Dendritic cell treated with granulocyte-macrophage colony-stimulating factor and Interleukin-4, amounts not matched to agents 40 ng/mL and 50 ng/mL, for 4 days (primary cell): ENCODE measurements at regions of chr6 and their contacts with region 1.

Region 1: DNA sequence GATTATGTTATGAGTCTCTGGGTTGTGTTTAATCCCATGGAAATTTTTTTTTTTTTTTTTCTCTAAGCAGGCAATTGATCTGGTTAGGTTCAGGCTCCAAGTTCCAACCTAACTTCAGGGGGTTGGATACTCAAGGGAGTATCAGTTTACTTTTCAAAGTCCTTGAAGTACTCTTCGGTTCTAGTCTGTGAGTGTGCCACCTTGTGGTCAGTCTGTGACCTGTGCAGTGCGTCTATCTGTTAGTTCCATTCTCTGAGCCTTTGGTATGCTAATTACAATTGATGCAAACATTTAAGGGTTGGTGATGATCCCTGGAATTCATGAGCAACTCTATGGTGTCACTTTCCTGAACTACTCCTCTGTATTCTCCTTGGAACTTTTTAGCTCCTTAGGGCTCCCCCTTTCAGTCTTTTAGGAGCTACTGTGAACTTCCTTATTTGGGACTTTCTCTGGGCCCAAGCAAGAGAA is 342.0 kb downstream of the SOX4 start:
- H3K4me3 Mint-ChIP-seq: no peak overlapping the region
- H3K27ac Mint-ChIP-seq: no peak overlapping the region
- H3K4me1 Mint-ChIP-seq: no peaks in the 10 kb centered on the region
- H3K27me3 Mint-ChIP-seq: no peaks in the 10 kb centered on the region

Region 2: DNA sequence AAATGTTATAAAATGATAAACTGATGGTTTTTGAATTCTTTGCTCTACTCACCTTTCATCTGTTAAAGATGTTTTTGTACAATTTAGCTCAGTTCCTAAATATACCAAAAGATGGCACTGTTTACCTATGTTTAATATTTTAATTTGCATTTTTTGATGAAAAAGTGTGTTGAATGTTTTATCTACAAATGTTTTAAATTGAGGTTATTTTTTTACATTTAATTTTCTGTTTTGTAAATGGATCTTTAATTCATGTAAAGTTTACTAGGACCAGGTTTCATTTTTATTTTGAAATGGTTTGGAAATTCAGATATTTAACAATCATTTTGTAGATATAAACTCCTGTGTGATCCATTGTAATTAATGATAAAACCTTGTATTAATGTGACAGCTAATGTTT is 1371.3 kb before region 1 on chr6:
- intact Hi-C with region 1: loop called (anchors 10 kb)
- H3K4me3 Mint-ChIP-seq: no peak overlapping the region
- H3K27ac Mint-ChIP-seq: no peak overlapping the region
- H3K4me1 Mint-ChIP-seq: no peaks in the 10 kb centered on the region
- H3K27me3 Mint-ChIP-seq: no peaks in the 10 kb centered on the region

Region 3: DNA sequence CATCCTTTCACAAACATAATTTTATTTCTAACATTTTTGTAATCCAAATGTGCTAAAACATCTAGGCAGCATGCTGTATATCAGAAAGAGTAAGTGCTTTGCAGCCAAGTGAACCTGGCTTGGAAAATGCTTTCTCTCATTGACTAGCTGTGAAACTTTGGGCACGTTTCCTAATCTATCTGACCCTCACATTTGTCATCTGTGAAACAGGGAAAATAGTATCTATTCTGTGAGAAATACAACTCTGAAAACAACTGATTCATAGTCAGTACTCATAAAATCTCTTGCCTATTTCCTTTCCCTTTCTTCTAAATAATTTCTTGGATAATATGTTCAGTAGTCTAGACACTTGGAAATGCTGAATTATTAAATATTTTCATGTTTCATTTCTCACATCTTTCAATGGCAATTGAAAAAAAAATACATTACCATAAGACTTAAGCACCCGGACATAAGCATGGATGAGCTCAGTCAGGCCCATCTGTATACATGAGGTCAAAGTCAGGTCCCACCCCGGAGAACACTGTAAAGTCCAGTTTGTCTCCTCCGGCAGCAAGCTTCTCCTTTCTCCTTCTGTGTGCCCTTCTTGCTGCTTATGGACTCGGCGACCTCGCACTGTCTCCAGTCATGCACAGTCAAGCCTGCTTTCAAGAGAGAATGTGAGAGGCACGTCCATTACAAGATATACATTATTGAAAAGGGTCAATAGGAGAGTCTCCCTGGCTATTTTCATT is 797.1 kb before region 1 on chr6:
- intact Hi-C with region 1: no loop called
- H3K4me3 Mint-ChIP-seq: no peak overlapping the region
- H3K27ac Mint-ChIP-seq: no peak overlapping the region
- H3K4me1 Mint-ChIP-seq: no peaks in the 10 kb centered on the region
- H3K27me3 Mint-ChIP-seq: no peaks in the 10 kb centered on the region

Region 4: GRCh38 chr6:21597801-21598673 is 337.6 kb before region 1 on chr6:
- intact Hi-C with region 1: no loop called
- H3K4me3 Mint-ChIP-seq: peak overlapping the region; percentile 66
- H3K27ac Mint-ChIP-seq: no peak overlapping the region
- H3K4me1 Mint-ChIP-seq: peaks cover 21% of the 10 kb centered on the region
- H3K27me3 Mint-ChIP-seq: peaks cover 1% of the 10 kb centered on the region

Region 5: GRCh38 chr6:21900730-21901129 is 34.9 kb before region 1 on chr6:
- intact Hi-C with region 1: no loop called
- H3K4me3 Mint-ChIP-seq: no peak overlapping the region
- H3K27ac Mint-ChIP-seq: no peak overlapping the region
- H3K4me1 Mint-ChIP-seq: no peaks in the 10 kb centered on the region
- H3K27me3 Mint-ChIP-seq: no peaks in the 10 kb centered on the region

Region 6: DNA sequence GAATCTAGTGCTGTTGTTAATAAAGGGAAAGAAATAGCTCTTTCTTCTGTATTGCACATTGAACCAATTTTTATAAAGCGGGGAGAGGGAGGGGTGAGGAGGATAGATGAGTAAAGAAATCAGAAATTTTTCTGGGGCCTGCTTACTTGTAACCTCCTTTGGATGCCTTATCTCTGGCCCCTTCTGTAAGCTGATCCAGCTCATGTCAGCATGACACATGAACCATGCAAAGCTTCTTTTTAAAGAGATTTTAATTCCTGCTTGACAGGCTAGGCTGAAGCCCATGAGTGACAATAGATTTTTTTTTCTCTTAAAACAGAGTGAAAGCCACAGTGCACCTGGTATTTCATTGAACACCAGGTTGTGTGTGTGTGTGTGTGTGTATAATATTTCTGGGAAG is 35.9 kb after region 1 on chr6:
- intact Hi-C with region 1: no loop called
- H3K4me3 Mint-ChIP-seq: no peak overlapping the region
- H3K27ac Mint-ChIP-seq: no peak overlapping the region
- H3K4me1 Mint-ChIP-seq: no peaks in the 10 kb centered on the region
- H3K27me3 Mint-ChIP-seq: no peaks in the 10 kb centered on the region